Mammary epithelial cell (primary cell): ENCODE measurements at regions of chr6 and their contacts with region 1.

Region 1: DNA sequence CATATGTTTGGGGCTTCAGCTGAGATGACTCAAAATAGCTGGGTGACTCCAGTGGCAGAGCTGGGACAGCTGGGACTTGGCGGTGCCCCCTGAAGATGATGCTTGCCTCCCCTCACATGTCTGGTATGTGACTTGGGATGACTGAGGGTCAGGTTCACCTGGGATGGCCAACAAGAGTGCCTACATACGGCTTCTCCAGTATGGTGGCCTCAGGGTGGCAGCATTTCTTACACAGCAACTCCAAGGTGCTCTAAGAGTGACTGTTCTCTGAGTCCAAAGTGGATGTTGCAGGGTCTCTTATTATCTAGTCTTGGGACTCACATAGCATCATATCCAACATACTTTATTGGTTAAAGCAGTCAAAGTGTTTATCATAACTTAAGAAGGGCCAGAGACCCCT is 87.8 kb upstream of the CENPW start:
- DNase-seq: no peak
- H3K4me3 ChIP-seq: no peak overlapping the region
- H3K27ac ChIP-seq: no peak overlapping the region
- H3K4me1 ChIP-seq: no peaks in the 10 kb centered on the region
- H3K27me3 ChIP-seq: no peaks in the 10 kb centered on the region
- CTCF ChIP-seq: peak in 1 of 2 donors; percentile 5

Region 2: GRCh38 chr6:126300735-126301134 is 48.6 kb after region 1 on chr6:
- CTCF ChIA-PET with region 1: no interaction called
- dilution Hi-C with region 1: loop called (anchors 5 kb)
- in situ Hi-C with region 1: no loop called
- intact Hi-C with region 1: no loop called
- DNase-seq: no peak
- H3K4me3 ChIP-seq: no peak overlapping the region
- H3K27ac ChIP-seq: no peak overlapping the region
- H3K4me1 ChIP-seq: no peaks in the 10 kb centered on the region
- H3K27me3 ChIP-seq: no peaks in the 10 kb centered on the region
- CTCF ChIP-seq: no peak